Cardiac septum (tissue), 1 donor: ENCODE measurements at regions of chr11 and their contacts with region 1.

Region 1: GRCh38 chr11:44727373-44728287 is 868 bp downstream of the TSPAN18 start:
- DNase-seq: peak; percentile 93

Region 2: DNA sequence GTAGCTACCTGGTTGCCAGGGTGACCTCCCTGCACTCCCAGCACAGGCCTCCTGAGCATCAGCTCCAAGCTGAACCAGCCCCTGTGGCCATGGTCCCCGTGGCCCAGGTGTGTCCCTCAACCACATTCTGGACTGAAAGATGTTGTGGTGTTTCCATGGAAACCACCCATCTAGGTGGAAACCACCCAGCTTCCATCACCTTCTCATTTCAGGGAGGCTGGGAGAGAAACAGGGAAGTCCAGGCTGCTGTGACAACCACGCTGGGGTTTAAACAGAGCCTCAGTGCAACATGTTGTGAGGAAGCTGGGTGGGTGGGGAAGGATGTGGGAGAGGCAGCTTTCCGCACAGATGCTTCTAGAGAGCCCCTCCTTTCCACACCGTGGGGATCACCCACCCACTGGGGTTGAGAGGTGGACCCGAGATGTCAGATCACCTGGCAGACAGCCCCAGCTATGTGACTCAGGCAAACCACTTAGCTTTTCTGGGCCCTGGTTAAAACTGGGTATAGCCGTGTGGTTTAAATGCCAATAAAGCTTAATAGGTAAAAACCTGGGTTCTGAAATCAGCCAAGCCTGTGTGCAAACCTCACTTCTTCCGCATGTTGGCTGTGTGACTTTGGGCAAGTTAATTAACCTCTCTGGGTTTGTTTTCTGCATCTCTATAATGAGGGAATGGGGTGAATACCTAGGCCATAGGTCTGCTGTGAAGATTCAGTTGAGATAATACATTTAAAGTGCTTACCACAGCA is 115.8 kb before region 1 on chr11:
- intact Hi-C with region 1: no loop called
- DNase-seq: no peak

Region 3: GRCh38 chr11:44634401-44635281 is 93.0 kb before region 1 on chr11:
- intact Hi-C with region 1: loop called (anchors 2 kb)
- DNase-seq: peak; percentile 85

Region 4: DNA sequence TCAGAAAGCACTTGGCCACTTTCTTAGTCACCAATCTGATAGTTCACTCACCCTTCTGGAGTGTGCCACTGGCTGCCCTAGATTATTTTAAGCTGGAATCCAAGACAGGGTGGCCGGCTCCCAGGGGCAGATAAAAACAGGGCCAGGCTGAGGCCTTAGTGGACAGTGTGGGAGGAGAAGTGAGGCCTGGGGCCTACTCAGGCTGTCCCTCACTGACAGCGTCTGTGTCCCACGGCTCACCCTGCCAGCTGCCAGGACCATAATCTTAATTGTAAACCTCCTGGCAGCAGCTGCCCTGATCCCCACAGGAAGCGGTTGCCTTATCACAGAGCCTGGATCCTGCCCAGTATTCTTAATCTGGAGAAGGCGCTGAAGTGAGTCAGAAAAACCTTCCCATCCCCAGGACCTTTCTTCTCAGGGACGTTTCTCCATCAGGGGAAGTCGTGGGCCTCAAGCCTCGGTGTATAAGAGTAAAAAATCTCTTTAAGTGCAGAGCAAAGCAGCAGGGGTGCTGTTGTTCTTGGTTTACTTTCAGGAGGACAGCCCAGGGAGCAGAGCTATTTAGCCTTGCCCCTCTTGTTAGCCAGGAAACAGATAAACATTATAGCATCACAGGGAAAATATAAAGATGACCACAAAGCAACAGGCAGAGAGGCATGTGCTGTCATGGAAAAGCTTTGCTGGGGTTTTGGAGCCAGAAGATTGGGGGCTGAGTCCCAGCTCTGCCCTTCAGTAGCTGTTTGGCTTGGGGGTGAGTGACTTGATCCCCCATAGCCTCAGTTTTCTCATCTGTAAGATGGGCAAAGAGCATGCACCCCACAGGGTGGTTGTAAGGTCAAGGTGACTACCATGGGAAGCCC is 38.7 kb after region 1 on chr11:
- intact Hi-C with region 1: loop called (anchors 2 kb)
- DNase-seq: peak; percentile 87

Region 5: DNA sequence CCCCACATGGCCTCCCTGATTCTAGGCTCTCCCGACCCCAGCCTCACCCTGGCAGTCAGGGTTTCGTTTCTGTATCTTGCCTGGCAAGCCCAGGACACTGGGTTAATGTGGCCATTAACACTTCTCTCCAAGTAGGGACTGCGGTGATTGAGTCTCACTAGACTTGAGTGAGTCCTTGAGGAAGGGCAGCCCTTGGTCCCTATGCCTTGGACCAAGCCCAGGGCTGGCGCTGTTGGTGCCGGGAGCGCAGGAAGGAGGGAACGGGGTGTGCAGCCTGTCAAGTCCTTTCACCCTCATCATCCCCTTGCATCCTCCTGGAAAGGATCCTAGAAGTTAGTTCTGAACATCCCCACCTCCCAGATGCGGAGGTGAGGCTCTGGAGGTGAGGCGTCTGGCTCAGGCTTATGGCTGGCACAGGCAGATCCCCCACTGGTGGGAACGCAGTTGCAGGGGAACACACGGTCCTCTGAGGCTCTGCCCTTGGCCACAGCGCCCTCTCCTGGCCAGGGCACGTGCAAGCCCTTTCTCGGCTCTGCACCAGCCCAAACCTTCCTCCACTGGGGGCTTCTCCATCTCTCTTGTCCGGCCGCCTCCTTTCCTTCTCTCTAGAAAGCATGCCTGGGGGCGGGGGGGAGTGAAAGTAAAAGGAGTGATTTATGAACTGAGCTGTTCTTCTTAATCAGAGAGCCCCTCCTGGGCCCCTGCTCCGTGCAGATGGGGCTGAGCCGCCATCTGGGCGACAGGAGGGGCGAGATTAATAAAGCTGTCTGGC is 166.4 kb after region 1 on chr11:
- intact Hi-C with region 1: loop called (anchors 2 kb)
- DNase-seq: no peak